Cardiac septum (tissue), 1 donor: ENCODE measurements at regions of chr1 and their contacts with region 1.

Region 1: GRCh38 chr1:24635195-24635843 is 7.8 kb upstream of the SRRM1 start:
- DNase-seq: no peak

Region 2: GRCh38 chr1:24201941-24202440 is 433.3 kb before region 1 on chr1:
- intact Hi-C with region 1: loop called (anchors 5 kb)
- DNase-seq: peak; percentile 83

Region 3: GRCh38 chr1:24385160-24385940 is 250.0 kb before region 1 on chr1:
- intact Hi-C with region 1: loop called (anchors 5 kb)
- DNase-seq: no peak

Region 4: GRCh38 chr1:24541711-24542346 is 93.5 kb before region 1 on chr1:
- intact Hi-C with region 1: loop called (anchors 1 kb)
- DNase-seq: peak; percentile 67

Region 5: DNA sequence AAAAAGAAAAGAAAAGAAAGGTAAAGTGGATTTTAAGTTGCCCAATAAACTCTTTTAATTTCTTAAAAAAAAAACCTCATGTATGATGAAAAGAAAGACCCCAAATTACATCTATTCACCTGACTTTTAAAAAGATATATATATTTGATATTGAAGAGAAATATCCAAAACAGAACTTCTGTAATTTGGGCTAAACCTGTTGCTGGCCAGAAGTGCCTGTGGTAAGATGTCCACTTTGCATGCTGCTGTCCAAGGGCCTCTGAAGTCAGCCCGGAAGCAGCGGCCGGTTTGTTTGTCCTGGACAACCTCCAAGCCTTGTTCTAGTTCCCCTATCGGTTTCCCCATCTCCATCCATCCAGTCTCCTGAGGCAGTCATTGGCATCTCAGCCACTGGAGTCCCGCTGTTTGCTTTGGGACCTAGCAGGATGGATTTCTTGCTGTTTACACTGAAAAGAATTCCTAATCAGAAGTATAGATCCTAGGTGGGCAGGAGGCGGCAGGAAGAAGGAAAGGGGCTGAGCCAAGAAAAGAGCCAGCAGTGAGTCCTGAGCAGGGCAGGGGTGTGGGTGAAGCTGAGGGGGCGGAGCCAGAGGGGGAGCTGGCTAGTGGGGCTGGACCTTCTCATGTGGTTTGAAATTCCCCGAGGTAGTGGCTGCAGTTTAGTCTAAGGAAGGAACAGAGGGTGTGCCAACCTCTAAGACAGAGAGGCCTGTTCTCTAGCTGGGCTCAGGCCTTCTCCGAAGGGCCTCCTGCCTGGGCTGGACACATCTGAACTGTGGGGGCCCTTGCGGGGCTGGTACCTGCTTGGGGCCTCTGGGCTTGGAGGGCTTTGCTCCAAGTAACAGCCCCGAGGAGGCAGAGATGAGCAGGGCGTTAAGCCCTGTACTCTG is 76.2 kb before region 1 on chr1:
- intact Hi-C with region 1: loop called (anchors 5 kb)
- DNase-seq: peak; percentile 75

Region 6: DNA sequence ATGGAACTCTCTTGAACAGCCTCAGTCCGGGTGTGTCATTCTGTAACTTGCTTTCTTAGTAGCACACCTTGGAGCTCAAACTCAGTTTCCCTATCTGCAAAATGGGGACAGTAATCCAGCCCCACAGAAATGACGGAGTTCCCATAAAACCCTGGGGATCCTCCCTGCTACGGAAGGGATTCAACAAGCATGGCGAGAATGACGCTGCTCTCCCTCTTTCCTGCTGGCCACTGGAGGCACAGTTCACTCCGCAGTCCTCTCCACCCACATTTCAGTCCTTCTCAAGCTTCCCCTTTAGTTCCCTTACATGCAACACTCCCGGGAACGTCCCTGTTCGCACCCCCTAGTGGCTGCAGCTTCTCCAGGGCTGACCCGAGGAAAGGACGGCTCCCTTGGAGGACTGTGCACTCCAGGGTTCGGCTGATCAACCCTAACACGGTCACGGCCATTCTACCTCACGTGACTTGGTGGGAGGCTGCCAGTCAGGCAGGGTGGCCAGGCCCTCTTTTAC is 274.1 kb after region 1 on chr1:
- intact Hi-C with region 1: no loop called
- DNase-seq: no peak